Breast epithelium (tissue), 4 donors: ENCODE measurements at regions of chr10 and their contacts with region 1.

Region 1: DNA sequence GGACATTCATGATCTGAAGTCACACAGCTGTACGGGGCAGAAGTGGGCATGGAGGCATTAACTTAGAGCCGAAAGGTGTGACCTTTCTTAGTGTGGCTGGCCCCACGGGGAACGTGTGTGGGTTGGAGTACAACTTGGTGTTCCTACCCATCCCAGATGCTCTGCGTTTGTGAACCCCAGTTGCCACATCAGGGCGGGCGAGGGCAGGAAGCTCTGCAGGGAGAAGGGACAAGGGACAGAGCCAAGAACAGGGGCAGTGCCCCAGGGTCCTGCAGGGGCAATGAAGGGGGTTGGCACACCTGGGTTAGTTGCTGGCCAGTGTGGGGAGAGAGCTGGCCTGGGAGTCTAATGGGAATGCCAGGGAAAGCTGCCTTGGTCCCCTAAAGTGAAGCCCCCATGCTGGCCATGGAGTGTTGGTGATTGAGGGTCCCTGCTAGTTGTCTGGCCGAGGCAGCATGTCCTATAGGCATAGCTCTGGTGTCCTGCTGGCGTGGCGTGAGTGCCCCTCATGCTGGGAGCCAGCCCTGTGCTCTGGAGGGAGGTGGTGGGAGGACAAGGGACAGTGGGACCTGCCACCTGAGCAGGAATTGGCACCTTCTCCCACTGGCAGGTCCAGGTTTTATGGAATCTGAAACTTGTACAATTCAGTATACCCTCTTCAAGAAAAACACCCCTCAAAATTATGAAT is 18.9 kb downstream of the HTRA1 start:
- DNase-seq: no peak
- H3K4me3 ChIP-seq: no peak overlapping the region
- H3K27ac ChIP-seq: peak overlapping the region in 1 of 2 donors; percentile 3
- H3K4me1 ChIP-seq: peaks cover 0 to 3% of the 10 kb centered on the region in 2 donors
- H3K27me3 ChIP-seq: no peaks in the 10 kb centered on the region
- CTCF ChIP-seq: no peak
- POLR2A ChIP-seq: no peak

Region 2: DNA sequence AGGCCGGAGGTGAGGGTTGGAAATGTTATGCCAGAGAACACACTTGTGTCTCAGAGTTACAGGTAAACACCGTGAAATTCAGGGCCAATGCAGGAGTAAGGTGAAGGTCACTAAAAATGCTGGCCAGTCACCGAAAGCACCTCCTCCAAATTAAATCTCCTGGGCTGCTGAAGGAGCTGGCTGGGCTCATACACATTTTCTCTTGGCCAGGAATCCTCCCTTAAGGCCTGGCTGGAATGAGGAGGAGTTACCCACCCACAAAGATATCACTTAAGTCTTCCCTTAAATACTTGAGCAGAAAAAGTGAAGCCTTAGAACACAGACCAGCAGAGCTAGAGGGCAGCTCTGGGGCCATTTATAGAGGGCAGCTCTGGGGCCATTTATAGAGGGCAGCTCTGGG is 27.3 kb after region 1 on chr10:
- intact Hi-C with region 1: loop called (anchors 1 kb)
- DNase-seq: no peak
- H3K4me3 ChIP-seq: no peak overlapping the region
- H3K27ac ChIP-seq: no peak overlapping the region
- H3K4me1 ChIP-seq: peaks cover 0 to 8% of the 10 kb centered on the region in 2 donors
- H3K27me3 ChIP-seq: no peaks in the 10 kb centered on the region
- CTCF ChIP-seq: no peak
- POLR2A ChIP-seq: no peak